H1 (cell line): ENCODE measurements at regions of chr3 and their contacts with region 1.

Region 1: GRCh38 chr3:122392868-122393844 is 9.2 kb downstream of the FAM162A start:
- DNase-seq: no peak
- H3K4me3 ChIP-seq: no peak overlapping the region
- H3K27ac ChIP-seq: no peak overlapping the region
- H3K4me1 ChIP-seq: no peaks in the 10 kb centered on the region
- H3K27me3 ChIP-seq: no peaks in the 10 kb centered on the region
- CTCF ChIP-seq: peak in 2 of 3 experiments; percentile 54 to 64; a peak in 2 of 4 replicates
- EP300 ChIP-seq: no peak
- POLR2A ChIP-seq: no peak
- RAD21 ChIP-seq: peak; percentile 73 to 78

Region 2: GRCh38 chr3:122409446-122409845 is 16.3 kb after region 1 on chr3:
- CTCF ChIA-PET with region 1: interaction called, 16 read pairs
- POLR2A ChIA-PET with region 1: no interaction called
- DNase-seq: no peak
- H3K4me3 ChIP-seq: no peak overlapping the region
- H3K27ac ChIP-seq: no peak overlapping the region
- H3K4me1 ChIP-seq: no peaks in the 10 kb centered on the region
- H3K27me3 ChIP-seq: no peaks in the 10 kb centered on the region
- CTCF ChIP-seq: no peak
- EP300 ChIP-seq: no peak
- POLR2A ChIP-seq: no peak
- RAD21 ChIP-seq: no peak

Region 3: DNA sequence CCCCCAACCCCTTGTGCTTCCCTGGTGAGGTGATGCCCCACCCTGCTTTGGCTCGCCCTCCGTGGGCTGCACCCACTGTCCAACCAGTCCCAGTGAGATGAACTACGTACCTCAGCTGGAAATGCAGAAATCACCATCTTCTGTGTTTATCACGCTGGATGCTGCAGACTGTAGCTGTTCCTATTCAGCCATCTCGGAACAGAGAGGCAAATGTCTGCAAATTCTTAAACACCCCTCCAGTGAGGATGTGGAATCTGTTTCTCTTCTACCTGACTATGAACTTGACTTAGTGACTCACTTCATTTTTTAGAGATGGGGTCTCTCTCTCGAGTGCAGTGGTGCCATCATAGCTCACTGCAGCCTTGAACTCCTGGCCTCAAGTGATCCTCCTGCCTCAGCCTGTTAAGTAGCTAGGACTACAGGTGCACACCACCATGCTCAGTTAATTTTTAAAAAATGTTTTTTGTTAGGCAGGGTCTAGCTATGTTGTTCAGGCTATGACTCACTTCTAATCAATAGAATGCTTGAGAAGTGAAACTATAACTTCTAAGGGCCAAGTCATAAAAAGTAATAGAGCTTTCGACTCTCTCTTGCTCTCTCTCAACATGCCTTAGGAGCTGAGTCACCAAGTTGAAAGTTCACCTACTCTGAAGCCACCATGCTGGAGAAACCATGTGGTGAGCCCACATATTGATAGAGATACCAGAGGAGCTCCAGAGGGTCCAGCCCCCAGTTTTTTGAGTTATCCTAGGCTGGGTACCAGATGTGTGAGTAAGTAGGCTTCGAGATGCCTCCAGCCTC is 276.0 kb after region 1 on chr3:
- CTCF ChIA-PET with region 1: interaction called, 15 read pairs
- POLR2A ChIA-PET with region 1: no interaction called
- DNase-seq: no peak
- H3K4me3 ChIP-seq: no peak overlapping the region
- H3K27ac ChIP-seq: no peak overlapping the region
- H3K4me1 ChIP-seq: no peaks in the 10 kb centered on the region
- H3K27me3 ChIP-seq: no peaks in the 10 kb centered on the region
- CTCF ChIP-seq: no peak
- EP300 ChIP-seq: no peak
- POLR2A ChIP-seq: no peak
- RAD21 ChIP-seq: no peak